WTC11 (cell line): ENCODE measurements at regions of chr3 and their contacts with region 1.

Region 1: GRCh38 chr3:132343018-132343612 is 25.9 kb downstream of the ACP3 start:
- DNase-seq: peak; percentile 26
- ATAC-seq: peak; percentile 76
- H3K4me3 Mint-ChIP-seq: no peak overlapping the region
- H3K27ac Mint-ChIP-seq: no peak overlapping the region
- H3K4me1 Mint-ChIP-seq: peaks cover 13% of the 10 kb centered on the region
- H3K27me3 Mint-ChIP-seq: no peaks in the 10 kb centered on the region
- CTCF ChIP-seq: peak; percentile 60

Region 2: DNA sequence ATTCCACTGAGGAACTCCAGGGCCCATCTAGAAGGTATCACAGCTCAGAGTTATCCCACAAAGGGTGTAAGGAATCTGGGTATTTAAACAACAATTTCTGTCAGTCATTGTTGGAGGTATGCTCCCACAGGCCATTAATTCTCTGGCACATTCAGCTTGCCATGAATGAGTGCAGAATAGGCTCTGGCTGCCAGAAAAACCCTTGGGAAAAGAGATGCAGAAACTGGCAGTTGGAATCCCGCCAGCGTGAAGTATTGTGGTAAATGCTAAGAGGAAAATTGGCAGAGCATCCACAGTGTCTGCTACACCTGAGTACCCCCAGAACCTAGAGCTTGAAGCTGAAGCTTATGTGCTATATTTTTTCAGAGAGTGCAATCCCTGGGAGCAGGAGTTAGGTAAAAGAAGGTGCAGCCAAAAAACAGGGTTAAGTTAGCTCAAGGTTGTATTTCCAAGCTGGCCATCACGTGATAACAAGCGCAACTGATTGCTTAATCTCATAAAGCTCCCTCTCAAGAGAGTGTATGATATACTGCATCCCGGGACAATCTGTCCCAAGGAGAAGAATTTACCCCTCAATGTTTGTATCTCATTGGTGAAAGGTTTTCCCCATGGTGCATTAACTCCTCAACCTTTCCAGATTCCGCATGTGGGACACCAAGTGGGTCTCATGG is 120.1 kb before region 1 on chr3:
- CTCF ChIA-PET with region 1: interaction called, 13 read pairs
- POLR2A ChIA-PET with region 1: no interaction called
- DNase-seq: no peak
- ATAC-seq: peak; percentile 44
- H3K4me3 Mint-ChIP-seq: no peak overlapping the region
- H3K27ac Mint-ChIP-seq: no peak overlapping the region
- H3K4me1 Mint-ChIP-seq: peaks cover 28% of the 10 kb centered on the region
- H3K27me3 Mint-ChIP-seq: no peaks in the 10 kb centered on the region
- CTCF ChIP-seq: no peak

Region 3: DNA sequence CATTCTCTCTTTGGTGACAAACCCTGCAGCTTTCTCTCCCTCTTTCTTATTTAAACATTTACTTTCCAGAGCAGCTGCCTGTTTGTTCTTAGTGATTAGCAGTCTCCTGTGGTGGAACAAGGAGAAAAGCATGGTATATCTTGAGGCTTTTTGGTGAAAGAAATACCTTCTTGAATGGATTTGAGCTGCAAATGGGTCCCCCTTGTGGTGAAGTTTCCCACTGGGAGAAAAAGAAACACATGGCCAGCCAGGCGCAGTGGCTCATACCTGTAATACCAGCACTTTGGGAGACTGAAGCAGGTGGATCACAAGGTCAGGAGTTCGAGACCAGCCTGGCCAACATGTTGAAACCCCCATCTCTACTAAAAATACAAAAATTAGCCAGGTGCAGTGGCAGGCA is 74.2 kb before region 1 on chr3:
- CTCF ChIA-PET with region 1: interaction called, 39 read pairs
- POLR2A ChIA-PET with region 1: no interaction called
- DNase-seq: peak; percentile 58
- ATAC-seq: peak; percentile 82
- H3K4me3 Mint-ChIP-seq: no peak overlapping the region
- H3K27ac Mint-ChIP-seq: no peak overlapping the region
- H3K4me1 Mint-ChIP-seq: peaks cover 20% of the 10 kb centered on the region
- H3K27me3 Mint-ChIP-seq: no peaks in the 10 kb centered on the region; the same call in 1 of the 2 replicates
- CTCF ChIP-seq: no peak

Region 4: GRCh38 chr3:132317229-132317948 is 25.7 kb before region 1 on chr3 and contains the start of gene ACP3:
- CTCF ChIA-PET with region 1: interaction called, 49 read pairs
- POLR2A ChIA-PET with region 1: no interaction called
- DNase-seq: no peak
- ATAC-seq: peak; percentile 96
- H3K4me3 Mint-ChIP-seq: peak within 1 kb of the TSS; percentile 44
- H3K27ac Mint-ChIP-seq: peak within 1 kb of the TSS; percentile 96
- H3K4me1 Mint-ChIP-seq: peaks cover 51% of the 10 kb centered on the region
- H3K27me3 Mint-ChIP-seq: no peaks in the 10 kb centered on the region
- CTCF ChIP-seq: no peak
- total RNA-seq, gene ACP3: 1.6 to 2.5 TPM (median 1.9 TPM) in 3 replicates

Region 5: DNA sequence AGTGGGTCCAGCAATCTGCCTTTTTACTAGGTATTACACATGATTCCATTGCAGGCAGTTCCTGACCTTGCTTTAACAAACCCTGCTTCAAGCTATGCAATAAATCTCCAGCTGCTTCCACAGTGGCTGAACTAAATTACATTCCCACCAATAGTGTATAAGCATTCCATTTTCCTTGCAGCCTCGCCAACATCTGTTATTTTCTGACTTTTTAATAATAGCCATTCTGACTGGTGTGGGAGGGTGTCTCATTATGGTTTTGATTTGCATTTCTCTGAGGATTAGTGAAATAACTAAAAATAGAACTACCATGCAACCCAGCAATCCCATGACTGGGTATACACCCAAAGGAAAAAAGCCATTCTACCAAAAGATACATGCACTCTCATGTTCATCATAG is 37.8 kb after region 1 on chr3:
- CTCF ChIA-PET with region 1: interaction called, 12 read pairs
- POLR2A ChIA-PET with region 1: no interaction called
- DNase-seq: no peak
- ATAC-seq: no peak
- H3K4me3 Mint-ChIP-seq: no peak overlapping the region
- H3K27ac Mint-ChIP-seq: peak overlapping the region; percentile 100
- H3K4me1 Mint-ChIP-seq: peaks cover 65% of the 10 kb centered on the region
- H3K27me3 Mint-ChIP-seq: no peaks in the 10 kb centered on the region; the same call in 1 of the 2 replicates
- CTCF ChIP-seq: no peak